GM12878 (cell line): ENCODE measurements at regions of chr3 and their contacts with region 1.

Region 1: GRCh38 chr3:52742418-52743041 is 28.2 kb downstream of the NEK4 start:
- DNase-seq: peak; percentile 15
- ATAC-seq: peak; percentile 83
- H3K4me3 ChIP-seq: no peak overlapping the region
- H3K27ac ChIP-seq: no peak overlapping the region
- H3K4me1 ChIP-seq: no peaks in the 10 kb centered on the region
- H3K27me3 ChIP-seq: no peaks in the 10 kb centered on the region
- CTCF ChIP-seq: peak; percentile 60 to 80 (median 68); a peak in 5 of 6 replicates
- EP300 ChIP-seq: no peak
- POLR2A ChIP-seq: no peak
- RAD21 ChIP-seq: peak; percentile 91

Region 2: DNA sequence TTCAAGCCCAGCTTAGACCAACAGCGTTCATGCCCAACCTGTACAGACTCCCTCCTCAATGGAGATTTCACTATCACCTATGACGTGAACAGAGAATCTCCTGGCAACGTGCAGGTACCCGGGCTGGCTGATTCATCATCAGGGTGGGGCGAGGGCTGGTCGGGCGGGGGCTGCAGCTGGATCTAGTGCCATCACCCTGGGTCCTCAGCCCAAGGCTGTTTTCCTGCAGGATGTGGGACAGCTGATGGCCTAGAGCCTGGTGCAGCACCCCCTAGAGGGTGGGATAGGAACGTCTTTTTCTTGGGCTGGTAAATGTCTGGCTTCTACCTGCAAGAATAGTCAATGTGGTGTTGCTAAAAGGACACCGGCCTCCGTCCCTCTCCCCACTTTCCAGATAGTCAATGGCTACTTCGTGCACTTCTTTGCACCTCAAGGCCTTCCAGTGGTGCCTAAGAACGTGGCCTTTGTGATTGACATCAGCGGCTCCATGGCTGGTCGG is 56.5 kb after region 1 on chr3:
- CTCF ChIA-PET with region 1: interaction called, 13 read pairs
- POLR2A ChIA-PET with region 1: no interaction called
- RAD21 ChIA-PET with region 1: interaction called, 3 read pairs
- SMC1A ChIA-PET with region 1: interaction called, 3 read pairs
- in situ Hi-C with region 1: no loop called
- intact Hi-C with region 1: loop called (anchors 1 kb)
- DNase-seq: no peak
- ATAC-seq: peak; percentile 76
- H3K4me3 ChIP-seq: no peak overlapping the region
- H3K27ac ChIP-seq: no peak overlapping the region
- H3K4me1 ChIP-seq: no peaks in the 10 kb centered on the region
- H3K27me3 ChIP-seq: no peaks in the 10 kb centered on the region
- CTCF ChIP-seq: peak; percentile 42 to 67 (median 64)
- EP300 ChIP-seq: no peak
- POLR2A ChIP-seq: no peak
- RAD21 ChIP-seq: peak; percentile 22; the same call in 1 of the 2 replicates

Region 3: GRCh38 chr3:52820736-52821135 is 78.2 kb after region 1 on chr3:
- CTCF ChIA-PET with region 1: interaction called, 25 read pairs
- POLR2A ChIA-PET with region 1: interaction called, 7 read pairs
- RAD21 ChIA-PET with region 1: interaction called, 8 read pairs
- SMC1A ChIA-PET with region 1: interaction called, 5 read pairs
- in situ Hi-C with region 1: no loop called
- intact Hi-C with region 1: loop called (anchors 1 kb)
- DNase-seq: no peak
- ATAC-seq: peak; percentile 85
- H3K4me3 ChIP-seq: no peak overlapping the region
- H3K27ac ChIP-seq: no peak overlapping the region
- H3K4me1 ChIP-seq: no peaks in the 10 kb centered on the region
- H3K27me3 ChIP-seq: no peaks in the 10 kb centered on the region
- CTCF ChIP-seq: peak; percentile 52 to 84 (median 66)
- EP300 ChIP-seq: no peak
- POLR2A ChIP-seq: no peak
- RAD21 ChIP-seq: peak; percentile 54

Region 4: DNA sequence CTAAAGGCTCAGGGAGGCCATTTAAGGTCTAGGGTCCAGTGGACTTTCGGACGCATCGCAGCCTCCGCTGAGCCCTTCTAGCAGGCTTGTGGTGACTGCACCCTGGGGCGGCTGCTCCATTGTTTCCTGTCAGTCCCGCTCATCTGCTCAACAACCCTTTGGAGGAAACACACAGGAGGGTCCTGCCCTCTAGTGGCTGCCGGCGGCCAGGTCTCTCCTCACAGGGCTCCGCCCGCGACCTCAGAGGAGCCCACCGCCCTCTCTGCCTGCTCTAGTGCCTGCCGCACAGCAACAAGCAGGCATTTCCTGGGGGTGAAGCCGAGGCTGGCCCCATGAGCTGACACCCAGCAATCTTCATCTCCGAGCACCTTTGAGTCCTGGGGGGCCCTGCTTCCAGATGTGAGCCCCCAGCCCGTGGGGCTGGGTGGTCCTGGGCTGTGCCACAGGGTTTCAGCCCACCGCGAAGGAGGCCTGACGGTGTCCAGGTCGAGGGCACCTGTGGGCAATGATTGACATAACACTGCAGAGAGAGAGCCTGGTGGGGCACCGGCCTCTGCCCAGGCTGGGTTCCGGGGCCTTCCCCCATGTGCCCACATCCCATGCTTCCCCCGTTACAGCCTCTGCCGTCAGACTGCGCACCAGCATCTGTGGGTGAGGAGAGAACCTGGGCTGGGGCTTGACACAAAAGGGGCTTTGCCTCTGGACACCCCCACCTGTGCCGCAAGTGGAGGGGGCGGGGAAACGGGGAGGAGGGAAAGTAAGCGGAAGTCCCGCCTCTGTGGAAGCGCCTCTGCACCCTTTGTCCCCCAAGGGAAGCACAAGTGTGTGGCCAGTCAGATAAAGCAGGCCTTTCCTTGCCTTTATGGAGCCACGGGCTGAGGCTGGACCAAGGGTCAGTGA is 330.4 kb after region 1 on chr3:
- CTCF ChIA-PET with region 1: no interaction called
- POLR2A ChIA-PET with region 1: no interaction called
- RAD21 ChIA-PET with region 1: interaction called, 3 read pairs
- SMC1A ChIA-PET with region 1: interaction called, 3 read pairs
- in situ Hi-C with region 1: loop called (anchors 5 kb)
- intact Hi-C with region 1: loop called (anchors 1 kb)
- DNase-seq: peak; percentile 43
- ATAC-seq: peak; percentile 97
- H3K4me3 ChIP-seq: peak overlapping the region; percentile 85
- H3K27ac ChIP-seq: peak overlapping the region; percentile 51
- H3K4me1 ChIP-seq: peaks cover 9% of the 10 kb centered on the region
- H3K27me3 ChIP-seq: no peaks in the 10 kb centered on the region
- CTCF ChIP-seq: peak; percentile 95 to 96 (median 95); a peak in 5 of 6 replicates
- EP300 ChIP-seq: no peak
- POLR2A ChIP-seq: no peak
- RAD21 ChIP-seq: peak; percentile 86